ENCODE measurements at regions of chr6 and their contacts with region 1.

Region 1: GRCh38 chr6:36451391-36451790 is 8.6 kb downstream of the KCTD20 start:
- DNase-seq: no peak
- H3K4me3 ChIP-seq: no peak overlapping the region
- H3K27ac ChIP-seq: no peak overlapping the region
- H3K4me1 ChIP-seq: no peaks in the 10 kb centered on the region
- H3K27me3 ChIP-seq: no peaks in the 10 kb centered on the region
- CTCF ChIP-seq: no peak

Region 2: DNA sequence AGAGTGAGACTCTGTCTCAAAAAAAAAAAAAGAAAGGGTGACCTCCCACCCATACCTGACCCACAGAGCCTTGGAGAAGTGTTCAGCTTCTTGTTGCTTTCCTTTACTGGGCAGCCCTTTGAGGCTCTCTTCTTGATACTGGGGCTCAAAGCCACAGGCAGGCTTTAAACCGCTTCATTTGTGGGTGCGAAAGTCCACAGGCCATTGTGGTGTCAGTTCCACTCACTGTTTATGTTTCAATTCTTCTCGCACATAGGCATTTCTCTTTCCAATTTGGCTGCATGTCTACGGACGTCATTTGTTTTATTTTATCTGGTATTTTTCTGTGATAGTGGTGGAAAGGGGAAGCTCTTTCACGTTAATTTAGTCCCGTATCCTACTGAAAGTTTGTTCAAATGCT is 1074.4 kb before region 1 on chr6:
- CTCF ChIA-PET with region 1: interaction called, 12 read pairs
- dilution Hi-C with region 1: no loop called
- in situ Hi-C with region 1: no loop called
- intact Hi-C with region 1: no loop called
- DNase-seq: no peak
- H3K4me3 ChIP-seq: no peak overlapping the region
- H3K27ac ChIP-seq: no peak overlapping the region
- H3K4me1 ChIP-seq: no peaks in the 10 kb centered on the region
- H3K27me3 ChIP-seq: no peaks in the 10 kb centered on the region
- CTCF ChIP-seq: no peak